ENCODE measurements at regions of chr12 and their contacts with region 1.

Region 1: GRCh38 chr12:122064025-122064777 is 14.4 kb upstream of the MLXIP start:
- DNase-seq: peak; percentile 89
- H3K4me3 ChIP-seq: no peak overlapping the region
- CTCF ChIP-seq: peak; percentile 59

Region 2: GRCh38 chr12:121970581-121971300 is 93.5 kb before region 1 on chr12:
- in situ Hi-C with region 1: no loop called
- DNase-seq: no peak
- H3K4me3 ChIP-seq: no peak overlapping the region
- CTCF ChIP-seq: no peak

Region 3: DNA sequence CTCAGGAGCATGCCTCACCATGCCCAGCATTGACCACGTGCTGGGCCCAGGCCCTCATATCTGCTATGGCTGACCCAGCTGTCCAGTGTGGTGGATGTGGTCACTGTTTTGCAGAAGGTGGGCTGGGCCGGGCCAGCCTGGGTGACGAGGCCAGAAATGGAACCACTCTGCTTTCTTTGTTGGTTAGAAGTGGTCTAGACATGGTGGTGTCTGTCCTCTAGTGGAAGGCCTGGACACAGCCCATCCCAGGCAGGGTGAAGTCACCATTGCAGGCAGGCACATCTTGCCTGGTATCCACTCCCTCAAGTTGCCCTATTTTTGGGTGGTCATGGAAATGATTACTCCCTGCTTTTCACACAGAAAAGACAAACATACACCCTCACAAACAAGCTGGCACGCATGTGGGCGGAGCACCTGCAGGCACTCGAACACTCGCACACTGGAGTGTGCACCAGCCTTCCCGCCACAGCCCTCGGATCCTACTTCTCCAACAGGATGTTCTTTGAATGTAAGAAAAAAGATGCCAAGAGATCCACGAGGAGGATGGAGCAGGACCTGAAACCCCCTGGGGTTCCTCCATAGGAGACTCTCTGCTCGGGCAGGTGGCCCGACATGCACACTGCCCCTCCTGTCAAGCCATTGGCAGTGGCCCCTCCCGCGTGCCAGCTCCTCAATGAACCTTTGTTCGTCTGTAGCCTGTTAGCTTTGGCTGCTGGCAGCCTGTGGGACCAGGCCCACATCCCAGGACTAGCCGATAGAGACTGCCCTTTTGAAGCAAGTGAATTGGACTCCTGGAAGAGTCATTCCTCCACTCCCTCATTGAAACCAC is 52.7 kb after region 1 on chr12:
- in situ Hi-C with region 1: loop called (anchors 5 kb)
- DNase-seq: no peak
- H3K4me3 ChIP-seq: no peak overlapping the region
- CTCF ChIP-seq: peak; percentile 17

Measured in astrocyte of the cerebellum (primary cell).